ENCODE measurements at regions of chrX and their contacts with region 1.

Region 1: DNA sequence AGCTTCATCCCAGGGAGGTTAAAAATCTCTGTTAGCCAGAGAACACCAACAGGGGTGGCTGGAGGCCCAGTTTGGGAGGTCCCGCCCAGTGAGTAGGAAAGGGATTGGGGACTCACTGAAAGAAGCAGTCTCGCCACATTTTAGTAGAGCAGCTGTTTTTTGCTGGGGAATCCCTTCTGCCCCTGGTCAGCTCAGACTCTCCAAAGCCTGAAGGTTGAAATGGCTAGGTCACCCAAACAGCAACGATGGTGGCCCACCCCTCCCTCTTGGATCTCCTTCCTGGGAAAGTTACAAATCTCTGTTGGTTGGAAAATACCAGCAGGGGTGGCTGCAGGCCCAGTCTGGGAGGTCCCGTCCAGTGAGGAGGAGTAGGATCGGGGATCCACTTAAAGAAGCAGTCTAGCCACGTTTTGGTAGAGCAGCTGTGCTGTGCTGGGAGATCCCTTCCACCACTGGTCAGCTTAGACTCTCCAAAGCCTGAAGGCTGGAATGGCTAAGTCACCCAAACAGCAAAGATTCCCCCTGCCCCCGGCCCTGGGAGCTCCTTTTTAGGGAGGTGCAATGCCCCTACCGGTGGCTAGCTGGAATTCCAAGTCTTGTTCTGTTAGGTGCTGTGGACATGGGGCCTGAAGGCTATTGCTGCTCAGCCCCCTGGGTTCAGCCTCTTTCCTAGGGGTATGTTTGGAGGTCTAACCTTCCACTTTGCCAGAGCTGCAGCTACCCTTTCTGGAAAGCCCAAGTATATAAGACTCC is 40.0 kb upstream of the TEX13A start:
- DNase-seq: no peak
- H3K4me3 ChIP-seq: no peak overlapping the region
- CTCF ChIP-seq: no peak

Region 2: DNA sequence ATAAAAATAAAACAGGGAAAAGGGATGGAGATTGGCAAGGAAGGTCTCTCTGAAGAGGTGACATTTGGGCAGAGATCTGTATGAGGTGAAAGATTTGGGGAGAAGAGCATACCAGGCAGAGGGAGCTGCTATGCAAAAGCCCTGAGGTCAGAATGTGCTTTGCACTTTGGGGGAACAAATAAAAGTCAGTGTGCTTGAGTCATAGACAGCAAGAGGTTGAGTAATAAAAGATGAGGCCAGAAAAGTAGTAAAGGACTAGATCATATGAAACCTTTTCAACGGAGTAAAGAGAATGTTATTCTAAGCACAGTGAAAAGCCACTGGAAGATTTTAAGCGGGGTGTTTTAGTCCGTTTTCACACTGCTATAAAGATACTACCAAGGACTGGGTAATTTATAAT is 36.6 kb after region 1 on chrX:
- in situ Hi-C with region 1: loop called (anchors 5 kb)
- DNase-seq: no peak
- H3K4me3 ChIP-seq: no peak overlapping the region
- CTCF ChIP-seq: no peak

Region 3: DNA sequence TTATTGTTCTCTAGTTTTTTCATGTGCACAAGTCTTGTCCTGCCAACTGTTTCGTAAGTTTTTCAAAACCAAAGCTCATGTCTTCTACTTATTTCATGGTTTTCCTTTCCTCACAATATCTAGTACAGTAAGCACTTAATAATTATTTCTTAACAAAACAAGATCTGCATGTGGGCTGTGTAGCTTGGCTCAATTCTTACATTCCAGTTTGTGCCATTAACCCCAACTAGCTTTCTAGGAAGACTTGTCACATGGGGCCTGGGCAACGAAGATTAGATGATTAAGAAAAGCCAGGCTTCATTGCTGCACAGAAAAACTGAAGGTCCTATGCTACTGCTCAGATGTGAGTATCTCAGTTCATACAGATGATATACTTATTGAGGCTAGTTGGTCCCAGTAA is 115.3 kb after region 1 on chrX:
- in situ Hi-C with region 1: no loop called
- DNase-seq: peak; percentile 63
- H3K4me3 ChIP-seq: no peak overlapping the region
- CTCF ChIP-seq: no peak

Measured in astrocyte of the cerebellum (primary cell).